Dorsolateral prefrontal cortex (tissue), 120 donors: ENCODE measurements at regions of chr4 and their contacts with region 1.

Region 1: GRCh38 chr4:6909073-6909965 is at the start of gene TBC1D14:
- DNase-seq: peak; percentile 79 to 91 (median 85)
- H3K4me3 ChIP-seq: peak within 1 kb of the TSS; percentile 59 to 99 (median 83)
- H3K27ac ChIP-seq: peak within 1 kb of the TSS; percentile 76 to 99 (median 96)
- H3K27me3 ChIP-seq: no peaks in the 10 kb centered on the region
- CTCF ChIP-seq: peak in 47 of 56 donors; percentile 15 to 69 (median 39)
- total RNA-seq, gene TBC1D14: 44.0 to 85.9 (median 62.0) TPM

Region 2: GRCh38 chr4:6963139-6963611 is 53.9 kb after region 1 on chr4:
- intact Hi-C with region 1: loop called in 1 of 2 experiments (anchors 5 kb)
- DNase-seq: peak in 1 of 10 donors; percentile 45
- H3K4me3 ChIP-seq: no peak overlapping the region
- H3K27ac ChIP-seq: peak overlapping the region in 58 of 59 donors; percentile 40 to 93 (median 82)
- H3K27me3 ChIP-seq: no peaks in the 10 kb centered on the region
- CTCF ChIP-seq: no peak

Region 3: GRCh38 chr4:6974138-6974848 is 65.0 kb after region 1 on chr4:
- intact Hi-C with region 1: loop called in 1 of 2 experiments (anchors 5 kb)
- DNase-seq: peak; percentile 70 to 90 (median 82)
- H3K4me3 ChIP-seq: peak overlapping the region in 3 of 59 donors; percentile 15 to 18 (median 15)
- H3K27ac ChIP-seq: peak overlapping the region in 7 of 59 donors; percentile 6 to 61 (median 23)
- H3K27me3 ChIP-seq: no peaks in the 10 kb centered on the region
- CTCF ChIP-seq: peak; percentile 91 to 99 (median 98)

Region 4: DNA sequence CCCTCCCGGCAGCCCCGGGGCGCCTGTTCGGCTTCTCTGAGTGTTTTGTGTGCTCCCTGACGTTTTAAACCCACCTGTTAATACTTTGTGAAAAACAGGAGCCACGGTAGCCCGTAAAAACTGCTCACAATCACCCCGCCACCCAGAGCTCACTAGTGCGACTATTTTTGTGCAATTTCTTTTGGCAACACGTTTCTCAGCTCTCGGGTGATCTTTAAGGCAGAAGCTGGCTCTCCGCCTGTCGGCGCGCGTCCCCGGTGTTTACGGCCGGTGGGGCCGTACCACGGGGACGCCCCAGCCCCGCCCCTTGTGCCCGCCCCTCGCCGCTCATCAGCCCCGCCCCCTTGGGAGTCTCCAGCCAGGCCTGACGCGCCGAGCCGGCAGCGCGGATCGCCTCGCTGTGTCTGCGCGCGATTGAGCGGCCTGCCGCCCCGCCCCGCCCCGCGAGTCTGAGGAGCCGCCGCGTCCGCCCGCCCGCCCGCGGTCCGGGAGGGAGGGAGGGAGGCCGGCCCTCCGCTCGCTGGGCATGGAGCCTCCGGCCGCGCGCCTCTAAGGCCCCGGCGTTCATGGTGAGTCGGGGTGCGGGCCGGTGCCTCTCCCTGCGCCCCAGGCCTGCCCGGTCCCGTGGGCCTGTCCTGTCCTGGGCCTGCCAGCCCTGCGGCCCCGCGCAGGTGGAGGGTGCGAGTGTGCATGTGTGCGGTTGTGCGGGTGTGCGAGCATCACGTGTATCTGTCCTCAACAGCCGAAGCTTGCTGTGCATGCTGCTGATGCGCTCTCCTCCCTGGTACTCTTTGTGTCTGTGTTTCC is 77.7 kb after region 1 on chr4:
- intact Hi-C with region 1: loop called (anchors 1 kb)
- DNase-seq: peak; percentile 91 to 98 (median 95)
- H3K4me3 ChIP-seq: peak overlapping the region; percentile 59 to 98 (median 91)
- H3K27ac ChIP-seq: peak overlapping the region; percentile 59 to 99 (median 96)
- H3K27me3 ChIP-seq: no peaks in the 10 kb centered on the region
- CTCF ChIP-seq: peak in 26 of 56 donors; percentile 7 to 56 (median 32)

Region 5: DNA sequence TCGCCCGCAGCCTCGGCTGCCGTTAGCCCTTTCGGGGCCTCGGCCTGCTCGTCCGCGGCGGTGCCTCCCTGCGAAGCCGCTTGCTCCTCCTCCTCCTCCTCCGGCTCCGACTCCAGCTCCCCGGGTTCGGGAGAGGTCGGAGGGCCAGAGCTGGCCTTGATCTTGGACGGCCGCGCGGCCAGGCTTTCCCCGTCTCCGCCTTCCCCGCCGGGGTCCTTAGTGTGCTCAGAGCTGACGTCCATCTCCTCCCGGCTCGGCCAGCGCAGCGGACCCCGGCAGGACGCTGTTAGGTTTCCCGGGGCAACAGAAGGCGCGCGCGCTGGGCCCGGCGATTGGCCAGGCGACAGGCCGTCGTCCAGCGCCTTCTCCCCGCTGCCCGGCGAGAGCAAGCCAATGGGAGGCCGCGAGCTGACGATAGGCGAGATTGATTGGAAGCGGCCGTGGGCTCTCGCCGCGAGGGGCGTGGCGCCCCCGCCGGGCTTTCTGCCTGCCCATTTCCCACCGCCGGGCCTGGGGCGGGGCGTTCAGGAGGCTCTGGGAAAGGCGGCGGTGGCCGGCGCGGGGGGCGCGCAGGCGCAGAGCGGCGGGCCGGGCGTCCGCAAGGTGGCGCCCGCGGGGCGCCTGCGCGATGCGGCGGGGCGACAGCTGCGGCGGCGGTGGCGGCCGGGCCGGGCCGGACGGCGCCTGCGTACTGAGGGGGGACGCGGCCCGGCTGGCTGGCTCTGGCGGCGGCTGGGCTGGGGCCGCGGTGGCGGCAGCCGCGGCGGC is 133.6 kb after region 1 on chr4 and contains the start of gene TADA2B:
- intact Hi-C with region 1: loop called (anchors 1 to 2 kb)
- DNase-seq: peak; percentile 91 to 98 (median 97)
- H3K4me3 ChIP-seq: peak within 1 kb of the TSS; percentile 74 to 100 (median 97)
- H3K27ac ChIP-seq: peak within 1 kb of the TSS in 56 of 59 donors; percentile 53 to 95 (median 82)
- H3K27me3 ChIP-seq: no peaks in the 10 kb centered on the region
- CTCF ChIP-seq: peak in 52 of 56 donors; percentile 7 to 73 (median 51)
- total RNA-seq, gene TADA2B: 19.6 to 36.0 (median 26.7) TPM

Region 6: GRCh38 chr4:7487998-7488671 is 578.8 kb after region 1 on chr4:
- intact Hi-C with region 1: no loop called
- DNase-seq: peak in 1 of 10 donors; percentile 34
- H3K4me3 ChIP-seq: no peak overlapping the region
- H3K27ac ChIP-seq: no peak overlapping the region
- H3K27me3 ChIP-seq: no peaks in the 10 kb centered on the region
- CTCF ChIP-seq: no peak